ENCODE measurements at regions of chr2 and their contacts with region 1.

Region 1: GRCh38 chr2:40448468-40449079 is 3.3 kb downstream of the SLC8A1 start:
- DNase-seq: no peak
- ATAC-seq: no peak
- H3K4me3 ChIP-seq: no peak overlapping the region
- H3K27ac ChIP-seq: peak overlapping the region in 7 of 12 donors; percentile 3 to 91 (median 21)
- H3K4me1 ChIP-seq: peaks cover 0 to 77% (median 48%) of the 10 kb centered on the region in 12 donors
- H3K27me3 ChIP-seq: no peaks in the 10 kb centered on the region
- CTCF ChIP-seq: peak; percentile 32 to 67 (median 56)
- POLR2A ChIP-seq: no peak

Region 2: DNA sequence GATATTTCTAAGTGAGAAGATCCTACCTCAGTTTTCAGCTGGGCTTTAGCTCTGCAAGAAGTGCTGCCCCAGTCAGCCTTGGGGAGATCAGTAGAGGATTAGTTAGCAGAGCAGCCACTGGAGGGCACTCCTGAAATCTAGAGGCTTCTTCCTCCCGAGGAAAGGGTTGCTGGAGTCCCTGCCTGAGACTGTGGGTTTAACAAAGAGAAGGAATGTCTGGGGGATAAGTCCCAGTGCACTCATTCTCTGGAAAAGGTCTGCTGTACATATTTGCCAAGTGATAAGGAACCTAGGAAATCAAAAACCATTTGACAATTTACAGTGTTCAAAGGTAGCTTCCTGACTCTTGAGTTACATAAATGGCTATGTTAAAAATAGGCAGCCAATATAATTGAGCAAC is 203.9 kb before region 1 on chr2:
- intact Hi-C with region 1: loop called in 3 of 10 experiments (anchors 2 to 10 kb)
- DNase-seq: peak in 4 of 5 donors; percentile 61 to 70 (median 68)
- ATAC-seq: peak; percentile 34 to 70 (median 68)
- H3K4me3 ChIP-seq: no peak overlapping the region
- H3K27ac ChIP-seq: peak overlapping the region in 10 of 12 donors; percentile 23 to 68 (median 54)
- H3K4me1 ChIP-seq: peaks cover 0 to 76% (median 46%) of the 10 kb centered on the region in 12 donors
- H3K27me3 ChIP-seq: no peaks in the 10 kb centered on the region
- CTCF ChIP-seq: peak; percentile 16 to 65 (median 54)
- POLR2A ChIP-seq: no peak

Region 3: GRCh38 chr2:40281021-40281940 is 167.3 kb before region 1 on chr2:
- intact Hi-C with region 1: loop called in 2 of 10 experiments (anchors 10 kb)
- DNase-seq: peak in 4 of 5 donors; percentile 39 to 62 (median 47)
- ATAC-seq: peak; percentile 63 to 90 (median 81)
- H3K4me3 ChIP-seq: peak overlapping the region in 1 of 12 donors; percentile 37
- H3K27ac ChIP-seq: peak overlapping the region; percentile 8 to 78 (median 70)
- H3K4me1 ChIP-seq: peaks cover 3 to 83% (median 59%) of the 10 kb centered on the region in 12 donors
- H3K27me3 ChIP-seq: no peaks in the 10 kb centered on the region
- CTCF ChIP-seq: no peak
- POLR2A ChIP-seq: no peak

Region 4: GRCh38 chr2:40401896-40402295 is 46.7 kb before region 1 on chr2:
- intact Hi-C with region 1: no loop called
- DNase-seq: no peak
- ATAC-seq: no peak
- H3K4me3 ChIP-seq: no peak overlapping the region
- H3K27ac ChIP-seq: peak overlapping the region in 2 of 12 donors; percentile 27 to 68
- H3K4me1 ChIP-seq: peaks cover 0 to 89% (median 51%) of the 10 kb centered on the region in 12 donors
- H3K27me3 ChIP-seq: no peaks in the 10 kb centered on the region
- CTCF ChIP-seq: no peak
- POLR2A ChIP-seq: no peak

Region 5: GRCh38 chr2:40488101-40488601 is 39.6 kb after region 1 on chr2:
- intact Hi-C with region 1: loop called in 3 of 10 experiments (anchors 2 to 5 kb)
- DNase-seq: no peak
- ATAC-seq: peak in 3 of 4 donors; percentile 32 to 51 (median 46)
- H3K4me3 ChIP-seq: peak overlapping the region in 8 of 12 donors; percentile 6 to 62 (median 54)
- H3K27ac ChIP-seq: peak overlapping the region; percentile 37 to 82 (median 71)
- H3K4me1 ChIP-seq: peaks cover 0 to 60% (median 28%) of the 10 kb centered on the region in 12 donors
- H3K27me3 ChIP-seq: no peaks in the 10 kb centered on the region
- CTCF ChIP-seq: peak; percentile 31 to 65 (median 50)
- POLR2A ChIP-seq: no peak

Region 6: GRCh38 chr2:40511661-40512213 is 63.2 kb after region 1 on chr2:
- intact Hi-C with region 1: loop called in 3 of 10 experiments (anchors 2 to 5 kb)
- DNase-seq: peak in 3 of 5 donors; percentile 18 to 30 (median 29)
- ATAC-seq: peak; percentile 27 to 66 (median 49)
- H3K4me3 ChIP-seq: peak overlapping the region; percentile 24 to 67 (median 60)
- H3K27ac ChIP-seq: peak overlapping the region; percentile 64 to 97 (median 92)
- H3K4me1 ChIP-seq: peaks cover 0 to 34% (median 8%) of the 10 kb centered on the region in 12 donors
- H3K27me3 ChIP-seq: no peaks in the 10 kb centered on the region
- CTCF ChIP-seq: no peak
- POLR2A ChIP-seq: no peak

Region 7: DNA sequence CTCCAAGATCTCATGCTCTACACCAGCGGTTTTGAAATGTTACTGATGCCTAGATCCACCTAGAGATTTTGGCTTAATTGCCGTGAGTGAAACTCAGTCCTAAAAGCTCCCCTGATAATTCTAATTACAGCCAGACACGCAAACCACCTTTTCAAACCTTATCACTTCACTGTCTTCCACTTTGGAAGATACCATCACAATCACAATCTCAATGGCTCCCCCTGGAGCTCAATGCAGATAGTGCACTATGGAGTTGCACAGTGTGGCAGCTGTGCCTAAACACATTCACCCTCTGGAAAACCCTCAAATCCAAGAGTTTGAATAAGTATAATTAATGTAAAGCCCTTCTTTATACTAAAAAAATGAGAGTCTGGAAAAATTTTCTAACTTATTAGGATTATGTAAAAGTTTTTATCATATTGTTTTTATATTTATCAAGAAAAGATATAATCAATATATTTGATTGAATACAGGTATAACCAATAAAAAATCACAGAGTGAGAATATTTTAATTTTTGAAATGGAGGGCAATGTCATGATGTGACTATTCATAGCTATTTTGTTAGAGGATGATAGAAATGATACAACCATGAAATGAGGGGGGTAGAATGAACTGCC is 106.2 kb after region 1 on chr2:
- intact Hi-C with region 1: loop called (anchors 2 to 10 kb)
- DNase-seq: peak in 4 of 5 donors; percentile 48 to 74 (median 64)
- ATAC-seq: peak in 3 of 4 donors; percentile 81 to 83 (median 83)
- H3K4me3 ChIP-seq: peak overlapping the region in 2 of 12 donors; percentile 3 to 24
- H3K27ac ChIP-seq: peak overlapping the region in 2 of 12 donors; percentile 55 to 60
- H3K4me1 ChIP-seq: peaks cover 0 to 11% (median 0%) of the 10 kb centered on the region in 12 donors
- H3K27me3 ChIP-seq: no peaks in the 10 kb centered on the region
- CTCF ChIP-seq: peak; percentile 81 to 96 (median 90)
- POLR2A ChIP-seq: no peak

Region 8: GRCh38 chr2:40579247-40579646 is 130.7 kb after region 1 on chr2:
- intact Hi-C with region 1: no loop called
- DNase-seq: no peak
- ATAC-seq: no peak
- H3K4me3 ChIP-seq: no peak overlapping the region
- H3K27ac ChIP-seq: no peak overlapping the region
- H3K4me1 ChIP-seq: peaks cover 0 to 5% (median 0%) of the 10 kb centered on the region in 12 donors
- H3K27me3 ChIP-seq: no peaks in the 10 kb centered on the region
- CTCF ChIP-seq: no peak
- POLR2A ChIP-seq: no peak

Region 9: GRCh38 chr2:40734797-40735196 is 286.2 kb after region 1 on chr2:
- intact Hi-C with region 1: no loop called
- DNase-seq: no peak
- ATAC-seq: no peak
- H3K4me3 ChIP-seq: no peak overlapping the region
- H3K27ac ChIP-seq: no peak overlapping the region
- H3K4me1 ChIP-seq: no peaks in the 10 kb centered on the region
- H3K27me3 ChIP-seq: no peaks in the 10 kb centered on the region
- CTCF ChIP-seq: no peak
- POLR2A ChIP-seq: no peak

Region 10: GRCh38 chr2:40760071-40760666 is 311.6 kb after region 1 on chr2:
- intact Hi-C with region 1: loop called in 3 of 10 experiments (anchors 10 kb)
- DNase-seq: peak in 4 of 5 donors; percentile 29 to 47 (median 33)
- ATAC-seq: peak; percentile 51 to 93 (median 89)
- H3K4me3 ChIP-seq: no peak overlapping the region
- H3K27ac ChIP-seq: peak overlapping the region in 1 of 12 donors; percentile 19
- H3K4me1 ChIP-seq: peaks cover 0 to 14% (median 6%) of the 10 kb centered on the region in 12 donors
- H3K27me3 ChIP-seq: no peaks in the 10 kb centered on the region
- CTCF ChIP-seq: peak; percentile 55 to 78 (median 66)
- POLR2A ChIP-seq: no peak

Measured in heart left ventricle (tissue), 16 donors.